GM18951 (cell line): ENCODE measurements at regions of chr22 and their contacts with region 1.

Region 1: GRCh38 chr22:19178656-19179496 is at the start of gene SLC25A1:
- POLR2A ChIP-seq: peak; percentile 66

Region 2: DNA sequence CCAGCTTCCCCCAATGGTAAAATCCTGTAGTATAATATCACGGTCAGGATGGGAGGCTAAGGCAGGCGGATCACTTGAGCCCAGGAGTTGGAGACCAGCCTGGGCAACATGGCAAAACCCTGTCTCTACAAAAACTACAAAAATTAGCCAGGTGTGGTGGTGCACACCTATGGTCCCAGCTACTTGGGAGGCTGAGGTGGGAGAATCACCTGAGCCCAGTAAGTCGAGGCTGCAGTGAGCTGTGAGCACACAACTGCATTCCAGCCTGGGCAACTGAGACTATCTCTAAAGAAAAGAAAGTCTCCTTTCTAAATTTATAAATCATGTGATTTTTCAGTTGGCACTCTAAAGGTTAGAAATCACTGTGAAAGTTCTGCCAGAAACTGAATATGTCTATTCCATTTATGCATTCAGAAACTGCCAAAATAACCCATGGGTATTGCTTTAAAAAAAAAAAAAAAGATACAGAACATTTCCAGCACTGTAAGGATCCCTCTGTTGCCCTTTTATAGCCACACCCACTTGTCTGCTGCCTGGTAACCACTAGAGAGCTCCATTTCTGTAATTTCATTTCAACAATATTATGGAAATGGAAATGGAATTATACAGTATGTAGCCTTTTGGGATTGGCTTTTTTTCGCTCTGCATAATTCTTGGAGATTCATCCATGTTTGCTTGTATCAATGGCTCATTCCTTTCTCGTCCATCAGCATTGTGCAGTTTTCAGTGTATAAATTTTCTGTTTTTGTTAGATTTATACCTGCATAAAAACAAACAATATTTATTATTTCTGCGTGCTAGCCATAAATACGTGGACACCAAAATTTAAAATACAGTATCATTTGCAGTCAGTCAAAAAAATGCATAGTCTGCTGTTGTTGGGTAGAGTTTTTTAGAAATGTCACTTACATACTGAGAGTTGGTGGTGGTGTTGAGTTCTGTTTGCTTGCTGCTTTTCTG is 310.3 kb after region 1 on chr22:
- in situ Hi-C with region 1: no loop called
- POLR2A ChIP-seq: no peak

Region 3: DNA sequence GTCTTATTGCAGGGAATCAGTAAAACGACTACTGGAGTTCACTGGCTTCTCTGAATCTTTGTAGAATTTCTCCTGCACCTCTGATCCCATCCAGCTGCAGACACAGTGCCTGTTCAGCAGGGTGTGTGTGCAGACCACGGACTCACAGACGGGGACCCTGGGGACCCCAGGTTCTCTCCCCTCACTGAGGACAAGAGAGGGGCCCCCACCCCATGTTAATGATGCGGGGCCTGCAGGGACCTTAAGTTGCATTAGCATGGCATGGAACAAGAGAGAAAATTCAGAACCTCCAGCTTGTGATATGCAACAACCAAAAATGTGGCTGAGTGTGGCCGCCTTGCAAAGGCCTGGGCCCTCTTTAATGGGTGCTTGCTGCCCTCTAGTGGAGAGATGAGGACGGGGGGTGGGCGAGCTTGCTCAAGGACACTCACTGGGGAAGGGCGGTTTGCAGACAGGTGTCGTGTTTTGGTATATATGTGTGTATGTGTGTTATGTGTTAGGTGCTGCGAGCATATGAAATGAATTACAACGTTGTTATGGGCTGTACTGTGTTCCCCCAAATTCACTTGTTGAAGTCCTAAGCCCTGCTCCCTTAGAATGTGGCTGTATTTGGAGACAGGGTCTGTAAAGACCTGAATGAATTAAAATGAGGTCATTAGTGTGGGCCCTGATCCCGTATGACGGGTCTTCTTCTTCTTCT is 451.0 kb after region 1 on chr22:
- in situ Hi-C with region 1: loop called (anchors 25 kb)
- POLR2A ChIP-seq: no peak